HepG2 (cell line): ENCODE measurements at regions of chrX and their contacts with region 1.

Region 1: DNA sequence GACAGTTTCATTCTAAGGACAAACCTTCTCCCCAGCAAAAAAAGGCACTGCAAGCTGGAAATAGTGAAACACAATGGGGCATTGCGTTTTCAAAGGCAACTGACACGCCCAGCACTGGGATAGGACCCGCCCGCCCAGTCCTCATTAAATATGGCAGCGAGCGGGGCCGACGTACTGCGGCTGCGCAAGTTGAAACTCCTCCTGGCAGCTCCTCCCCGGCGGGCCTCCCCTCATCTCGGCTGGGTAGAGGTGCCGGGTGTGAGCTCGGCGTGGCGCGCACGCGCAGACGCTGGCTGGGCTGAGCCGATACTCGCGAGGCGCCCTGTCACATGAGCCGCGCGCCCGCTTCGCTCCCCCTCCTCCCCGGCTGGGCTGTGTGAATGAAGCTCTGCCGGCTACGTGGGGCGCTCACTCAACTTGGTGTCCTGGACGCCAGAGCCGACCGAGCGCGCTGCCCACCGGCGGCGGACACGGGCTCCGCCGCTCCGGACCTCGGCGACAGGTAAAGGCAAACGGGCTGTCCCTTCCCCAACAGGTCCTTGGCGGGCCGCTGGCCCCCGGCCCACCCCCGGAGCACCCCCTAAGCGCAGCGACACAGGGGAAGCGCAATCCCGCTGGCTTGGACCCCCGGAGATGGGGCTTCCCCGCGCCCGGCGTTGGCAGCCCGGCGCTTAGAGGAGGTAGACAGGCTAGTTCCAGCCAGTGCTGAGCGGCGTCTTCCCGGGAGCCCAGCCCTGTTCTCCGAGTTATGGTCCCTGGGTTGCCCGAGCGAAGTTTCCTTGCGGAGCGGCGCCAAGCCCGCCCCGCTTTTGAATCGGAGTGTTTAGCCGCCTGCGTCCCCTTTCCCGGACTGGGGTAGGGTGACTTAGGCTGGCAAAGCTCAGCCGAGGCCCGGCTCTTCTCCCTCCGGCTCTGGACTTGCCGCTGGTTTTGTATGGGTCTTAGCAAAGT is at the start of gene CLCN5:
- DNase-seq: peak; percentile 88
- ATAC-seq: peak; percentile 95
- H3K4me3 ChIP-seq: peak within 1 kb of the TSS; percentile 65 to 82 (median 67)
- H3K27ac ChIP-seq: peak within 1 kb of the TSS; percentile 63
- H3K4me1 ChIP-seq: peaks cover 57% of the 10 kb centered on the region
- H3K27me3 ChIP-seq: no peaks in the 10 kb centered on the region
- CTCF ChIP-seq: no peak; the same call in 1 of the 2 replicates
- EP300 ChIP-seq: no peak
- POLR2A ChIP-seq: peak in 1 of 2 experiments; percentile 49; a peak in 3 of 4 replicates
- RAD21 ChIP-seq: no peak
- total RNA-seq, gene CLCN5: 21.4 and 27.3 TPM in 2 replicates

Region 2: DNA sequence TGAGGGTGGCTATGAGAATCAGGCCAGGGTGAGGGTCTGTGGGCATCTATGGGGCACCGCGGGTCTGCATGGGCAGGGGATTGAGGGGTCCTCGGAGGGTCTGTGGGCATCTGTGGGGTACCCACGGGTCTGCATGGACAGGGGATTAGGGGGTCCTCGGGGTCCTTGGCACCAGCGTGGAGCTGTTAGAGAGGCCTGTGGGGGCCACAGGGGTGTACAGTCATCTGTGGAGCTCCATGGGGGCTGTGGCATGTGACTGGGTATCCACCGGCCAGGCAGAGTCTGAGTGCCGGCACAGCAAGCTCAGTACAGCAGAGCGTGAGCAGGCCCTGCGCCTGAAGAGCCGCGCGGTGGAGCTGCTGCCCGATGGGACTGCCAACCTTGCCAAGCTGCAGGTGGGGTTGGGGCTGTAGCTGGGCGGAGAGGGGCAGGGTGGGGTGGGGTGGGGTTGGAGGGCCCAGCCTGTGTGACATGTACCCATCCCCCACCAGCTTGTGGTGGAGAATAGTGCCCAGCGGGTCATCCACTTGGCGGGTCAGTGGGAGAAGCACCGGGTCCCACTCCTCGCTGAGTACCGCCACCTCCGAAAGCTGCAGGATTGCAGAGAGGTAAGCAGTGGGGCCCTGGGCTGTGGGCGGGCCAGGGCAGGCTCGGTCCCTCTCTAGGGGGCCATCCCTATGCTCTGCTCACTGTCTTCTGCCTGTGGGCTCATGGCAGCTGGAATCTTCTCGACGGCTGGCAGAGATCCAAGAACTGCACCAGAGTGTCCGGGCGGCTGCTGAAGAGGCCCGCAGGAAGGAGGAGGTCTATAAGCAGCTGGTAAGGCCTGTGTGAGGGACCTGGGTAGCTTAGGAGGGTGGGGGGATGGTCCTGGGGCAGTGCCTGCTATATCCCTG is 674.4 kb before region 1 on chrX:
- CTCF ChIA-PET with region 1: no interaction called
- POLR2A ChIA-PET with region 1: no interaction called
- in situ Hi-C with region 1: no loop called
- intact Hi-C with region 1: no loop called
- DNase-seq: no peak
- ATAC-seq: no peak
- H3K4me3 ChIP-seq: no peak overlapping the region
- H3K27ac ChIP-seq: no peak overlapping the region
- H3K4me1 ChIP-seq: no peaks in the 10 kb centered on the region
- H3K27me3 ChIP-seq: no peaks in the 10 kb centered on the region
- CTCF ChIP-seq: no peak
- EP300 ChIP-seq: no peak
- POLR2A ChIP-seq: no peak
- RAD21 ChIP-seq: no peak

Region 3: GRCh38 chrX:49754233-49754857 is 168.2 kb before region 1 on chrX:
- CTCF ChIA-PET with region 1: no interaction called
- POLR2A ChIA-PET with region 1: no interaction called
- in situ Hi-C with region 1: loop called (anchors 25 kb)
- intact Hi-C with region 1: no loop called
- DNase-seq: peak; percentile 24
- ATAC-seq: peak; percentile 74
- H3K4me3 ChIP-seq: no peak overlapping the region
- H3K27ac ChIP-seq: no peak overlapping the region
- H3K4me1 ChIP-seq: peaks cover 11% of the 10 kb centered on the region
- H3K27me3 ChIP-seq: no peaks in the 10 kb centered on the region
- CTCF ChIP-seq: peak; percentile 69
- EP300 ChIP-seq: no peak
- POLR2A ChIP-seq: no peak
- RAD21 ChIP-seq: peak; percentile 25; the same call in 1 of the 2 replicates

Region 4: DNA sequence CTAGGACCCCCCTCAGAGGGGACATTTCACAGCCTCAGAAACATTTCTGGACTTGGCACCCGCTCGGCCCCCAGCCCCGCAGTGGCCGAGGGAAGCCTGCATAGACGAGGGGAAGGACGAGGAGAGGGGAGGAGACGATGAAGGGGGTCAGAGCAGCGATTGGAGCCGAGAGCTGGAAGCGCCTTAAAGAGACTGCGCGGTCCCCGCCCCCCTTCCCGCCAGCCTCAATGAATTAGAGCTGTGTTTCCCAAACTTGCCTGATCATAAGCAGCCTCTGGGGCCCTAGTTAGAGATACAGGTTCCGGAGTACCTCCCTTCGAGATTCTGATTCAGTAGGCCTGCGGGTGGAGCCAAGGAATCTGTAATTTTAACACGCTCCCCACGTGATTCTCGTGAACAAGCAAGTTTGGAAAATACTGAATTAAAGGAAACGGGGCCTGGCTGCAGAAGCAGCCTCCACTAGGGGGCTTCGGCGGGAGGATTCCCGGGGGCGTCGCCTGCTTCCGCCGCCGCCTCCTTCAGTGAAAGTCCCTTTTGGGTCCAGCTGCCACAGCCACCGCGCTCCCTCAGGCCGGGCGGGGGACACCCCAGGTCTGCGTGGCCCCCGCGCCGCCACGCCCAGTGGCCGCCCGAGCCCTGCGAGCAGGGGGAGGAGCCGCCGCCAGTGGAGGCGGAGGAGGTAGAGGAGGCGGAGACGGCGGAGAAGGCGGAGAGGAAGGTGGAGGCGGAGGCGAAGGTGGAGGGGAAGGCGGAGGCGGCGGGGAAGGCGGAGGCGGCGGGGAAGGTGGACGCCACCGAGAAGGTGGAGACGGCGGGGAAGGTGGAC is 43.5 kb before region 1 on chrX and contains the start of gene USP27X:
- CTCF ChIA-PET with region 1: no interaction called
- POLR2A ChIA-PET with region 1: interaction called, 11 read pairs
- in situ Hi-C with region 1: no loop called
- intact Hi-C with region 1: no loop called
- DNase-seq: peak; percentile 86
- ATAC-seq: peak; percentile 72
- H3K4me3 ChIP-seq: peak within 1 kb of the TSS; percentile 52 to 76 (median 71)
- H3K27ac ChIP-seq: peak within 1 kb of the TSS; percentile 97
- H3K4me1 ChIP-seq: peaks cover 64% of the 10 kb centered on the region
- H3K27me3 ChIP-seq: no peaks in the 10 kb centered on the region; a peak in 1 of 5 replicates
- CTCF ChIP-seq: peak; percentile 60
- EP300 ChIP-seq: no peak
- POLR2A ChIP-seq: peak in 1 of 2 experiments; percentile 60; a peak in 1 of 4 replicates
- RAD21 ChIP-seq: peak; percentile 18; the same call in 1 of the 2 replicates
- total RNA-seq, gene USP27X: 7.2 and 7.5 TPM in 2 replicates

Region 5: GRCh38 chrX:49934148-49934547 is 11.6 kb after region 1 on chrX:
- CTCF ChIA-PET with region 1: no interaction called
- POLR2A ChIA-PET with region 1: no interaction called
- in situ Hi-C with region 1: no loop called
- intact Hi-C with region 1: no loop called
- DNase-seq: no peak
- ATAC-seq: no peak
- H3K4me3 ChIP-seq: no peak overlapping the region
- H3K27ac ChIP-seq: no peak overlapping the region
- H3K4me1 ChIP-seq: no peaks in the 10 kb centered on the region
- H3K27me3 ChIP-seq: no peaks in the 10 kb centered on the region
- CTCF ChIP-seq: no peak
- EP300 ChIP-seq: no peak
- POLR2A ChIP-seq: no peak
- RAD21 ChIP-seq: no peak

Region 6: DNA sequence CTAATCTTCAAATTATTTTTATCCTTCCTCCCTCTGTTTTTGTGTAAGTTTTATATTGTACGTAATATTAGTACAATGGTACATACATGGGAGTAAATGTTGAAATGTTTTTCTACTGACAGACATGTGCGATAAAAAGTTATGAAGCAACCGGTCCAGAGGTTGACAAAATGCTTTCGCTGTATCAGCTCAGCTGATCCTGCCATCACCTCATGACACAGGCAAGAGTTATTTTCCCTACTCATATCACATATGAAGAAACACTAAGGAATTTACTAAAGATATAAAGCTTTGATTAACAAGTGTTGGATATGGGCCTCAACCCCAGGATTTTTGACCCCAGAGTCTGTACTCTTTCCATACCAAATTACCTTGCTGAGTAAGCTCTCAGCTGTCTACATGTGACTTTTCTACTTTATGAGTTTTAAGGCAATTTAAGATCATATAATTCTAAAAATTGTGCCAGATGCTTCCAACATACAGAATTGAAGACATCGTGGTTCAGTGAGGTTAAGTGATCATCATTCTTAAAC is 49.8 kb after region 1 on chrX:
- CTCF ChIA-PET with region 1: no interaction called
- POLR2A ChIA-PET with region 1: no interaction called
- in situ Hi-C with region 1: no loop called
- intact Hi-C with region 1: no loop called
- DNase-seq: no peak
- ATAC-seq: no peak
- H3K4me3 ChIP-seq: no peak overlapping the region
- H3K27ac ChIP-seq: no peak overlapping the region
- H3K4me1 ChIP-seq: no peaks in the 10 kb centered on the region
- H3K27me3 ChIP-seq: no peaks in the 10 kb centered on the region
- CTCF ChIP-seq: no peak
- EP300 ChIP-seq: no peak
- POLR2A ChIP-seq: no peak
- RAD21 ChIP-seq: no peak

Region 7: GRCh38 chrX:50067435-50068284 is 145.1 kb after region 1 on chrX:
- CTCF ChIA-PET with region 1: no interaction called
- POLR2A ChIA-PET with region 1: interaction called, 7 read pairs
- in situ Hi-C with region 1: no loop called
- intact Hi-C with region 1: loop called (anchors 5 kb)
- DNase-seq: peak; percentile 66
- ATAC-seq: peak; percentile 88
- H3K4me3 ChIP-seq: peak overlapping the region; percentile 48 to 71 (median 63)
- H3K27ac ChIP-seq: peak overlapping the region; percentile 83
- H3K4me1 ChIP-seq: peaks cover 55% of the 10 kb centered on the region
- H3K27me3 ChIP-seq: no peaks in the 10 kb centered on the region
- CTCF ChIP-seq: no peak
- EP300 ChIP-seq: no peak
- POLR2A ChIP-seq: no peak
- RAD21 ChIP-seq: no peak

Region 8: GRCh38 chrX:50579955-50580354 is 657.4 kb after region 1 on chrX:
- CTCF ChIA-PET with region 1: no interaction called
- POLR2A ChIA-PET with region 1: no interaction called
- in situ Hi-C with region 1: loop called (anchors 25 kb)
- intact Hi-C with region 1: no loop called
- DNase-seq: peak; percentile 68
- ATAC-seq: peak; percentile 81
- H3K4me3 ChIP-seq: no peak overlapping the region
- H3K27ac ChIP-seq: no peak overlapping the region
- H3K4me1 ChIP-seq: no peaks in the 10 kb centered on the region
- H3K27me3 ChIP-seq: no peaks in the 10 kb centered on the region
- CTCF ChIP-seq: peak; percentile 76
- EP300 ChIP-seq: no peak
- POLR2A ChIP-seq: no peak
- RAD21 ChIP-seq: peak; percentile 29; the same call in 1 of the 2 replicates